Calu3 (cell line): ENCODE measurements at regions of chr16 and their contacts with region 1.

Region 1: DNA sequence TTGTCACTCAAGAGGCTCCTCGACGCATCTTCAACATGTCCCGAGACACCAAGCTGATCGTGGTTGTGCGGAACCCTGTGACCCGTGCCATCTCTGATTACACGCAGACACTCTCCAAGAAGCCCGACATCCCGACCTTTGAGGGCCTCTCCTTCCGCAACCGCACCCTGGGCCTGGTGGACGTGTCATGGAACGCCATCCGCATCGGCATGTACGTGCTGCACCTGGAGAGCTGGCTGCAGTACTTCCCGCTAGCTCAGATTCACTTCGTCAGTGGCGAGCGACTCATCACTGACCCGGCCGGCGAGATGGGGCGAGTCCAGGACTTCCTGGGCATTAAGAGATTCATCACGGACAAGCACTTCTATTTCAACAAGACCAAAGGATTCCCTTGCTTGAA is 101.0 kb downstream of the HS3ST2 start:
- DNase-seq: no peak
- H3K4me3 Mint-ChIP-seq: no peak overlapping the region
- H3K27ac Mint-ChIP-seq: no peak overlapping the region
- H3K4me1 Mint-ChIP-seq: no peaks in the 10 kb centered on the region
- H3K27me3 Mint-ChIP-seq: peaks cover 63% of the 10 kb centered on the region
- CTCF ChIP-seq: no peak

Region 2: GRCh38 chr16:22739077-22739476 is 175.9 kb before region 1 on chr16:
- CTCF ChIA-PET with region 1: interaction called, 14 read pairs
- intact Hi-C with region 1: no loop called
- DNase-seq: no peak
- H3K4me3 Mint-ChIP-seq: no peak overlapping the region
- H3K27ac Mint-ChIP-seq: no peak overlapping the region
- H3K4me1 Mint-ChIP-seq: no peaks in the 10 kb centered on the region
- H3K27me3 Mint-ChIP-seq: no peaks in the 10 kb centered on the region
- CTCF ChIP-seq: no peak